ENCODE measurements at regions of chr12 and their contacts with region 1.

Region 1: GRCh38 chr12:62813031-62813829 is 121.7 kb downstream of the PPM1H start:
- DNase-seq: peak; percentile 42
- CTCF ChIP-seq: peak; percentile 87

Region 2: DNA sequence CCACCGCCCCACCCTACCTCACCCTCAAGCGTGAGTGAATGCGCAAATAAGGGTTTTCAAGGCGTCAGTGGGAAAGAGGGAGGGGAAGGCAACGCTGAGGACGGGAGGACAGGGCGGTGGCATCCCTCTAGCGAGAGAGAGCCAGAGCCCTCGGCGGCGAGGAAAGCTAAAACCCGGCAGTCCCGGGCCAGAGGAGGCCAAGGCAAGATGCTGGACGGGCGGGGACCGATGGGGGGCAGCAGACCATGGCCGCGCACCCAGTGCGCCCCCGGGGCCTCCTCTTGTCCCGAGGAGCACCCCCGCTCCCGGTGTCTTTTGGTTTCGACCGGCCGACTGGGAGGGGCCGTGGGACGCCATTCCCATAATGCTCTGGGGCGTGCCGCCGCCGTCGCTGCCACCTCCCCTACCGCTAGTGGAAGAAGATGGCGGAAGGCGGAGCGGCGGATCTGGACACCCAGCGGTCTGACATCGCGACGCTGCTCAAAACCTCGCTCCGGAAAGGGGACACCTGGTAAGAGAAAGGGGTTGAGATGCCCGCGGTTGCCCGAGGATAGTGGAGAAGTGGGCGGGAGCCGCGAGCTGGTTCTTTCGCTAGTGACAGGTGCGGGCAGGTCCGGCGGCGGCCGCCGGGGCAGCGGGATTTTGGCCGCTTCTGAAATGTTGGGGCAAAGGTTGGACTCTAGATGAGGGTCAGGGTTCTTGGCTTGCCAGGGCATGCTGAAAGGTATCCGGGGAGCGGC is 553.1 kb before region 1 on chr12 and contains the start of gene USP15:
- in situ Hi-C with region 1: loop called (anchors 25 kb)
- DNase-seq: peak; percentile 84
- CTCF ChIP-seq: peak; percentile 75

Region 3: DNA sequence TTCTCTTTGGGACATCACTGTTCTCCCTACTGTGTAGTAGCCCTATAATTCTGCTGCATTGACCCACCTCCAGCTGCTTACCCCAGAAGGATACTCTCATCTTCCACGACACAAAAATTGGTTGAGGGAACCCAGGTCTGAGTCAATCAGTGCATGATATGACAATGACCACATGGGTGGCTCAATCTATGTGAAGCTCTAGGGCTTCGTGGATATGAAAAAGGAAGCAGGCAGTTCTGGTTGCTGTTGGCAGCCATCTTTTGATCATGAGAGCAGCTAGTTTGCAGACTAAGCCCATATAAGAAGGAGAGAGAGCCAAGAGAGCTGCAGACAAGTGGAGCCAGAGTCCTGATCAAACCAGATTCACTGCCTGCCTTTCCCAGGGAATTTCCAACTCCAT is 279.9 kb after region 1 on chr12:
- in situ Hi-C with region 1: no loop called
- DNase-seq: no peak
- CTCF ChIP-seq: no peak

Region 4: DNA sequence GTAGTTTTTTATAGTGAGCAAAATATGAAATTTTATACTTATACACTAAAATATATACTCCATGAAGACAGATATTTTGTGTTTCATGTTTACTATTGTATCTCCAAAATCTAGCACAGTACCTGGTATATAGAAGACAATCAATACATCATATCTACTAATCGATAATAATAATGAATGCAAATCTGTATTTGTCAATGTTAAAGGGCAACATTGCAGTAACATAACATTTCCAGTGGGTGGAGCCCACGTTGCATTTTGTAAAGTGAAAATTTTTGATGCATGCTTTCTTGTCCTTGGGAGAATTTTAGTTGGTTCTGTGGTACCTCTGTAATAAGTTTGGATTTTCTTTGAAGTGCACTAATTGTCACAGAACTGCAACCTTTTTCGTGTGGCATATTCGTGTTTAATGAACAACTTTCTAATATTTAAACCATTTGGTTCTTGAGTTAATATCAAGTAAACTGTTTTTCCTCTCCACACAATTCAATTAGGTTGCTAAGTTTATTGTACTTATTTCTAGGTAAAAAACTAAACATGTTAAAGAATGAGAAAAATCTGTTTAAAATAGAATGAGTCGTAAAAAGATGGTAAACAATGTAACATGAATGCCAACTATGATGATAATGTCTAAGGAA is 290.4 kb after region 1 on chr12:
- in situ Hi-C with region 1: no loop called
- DNase-seq: peak; percentile 19
- CTCF ChIP-seq: peak; percentile 68